PC-3 (cell line): ENCODE measurements at regions of chr19 and their contacts with region 1.

Region 1: DNA sequence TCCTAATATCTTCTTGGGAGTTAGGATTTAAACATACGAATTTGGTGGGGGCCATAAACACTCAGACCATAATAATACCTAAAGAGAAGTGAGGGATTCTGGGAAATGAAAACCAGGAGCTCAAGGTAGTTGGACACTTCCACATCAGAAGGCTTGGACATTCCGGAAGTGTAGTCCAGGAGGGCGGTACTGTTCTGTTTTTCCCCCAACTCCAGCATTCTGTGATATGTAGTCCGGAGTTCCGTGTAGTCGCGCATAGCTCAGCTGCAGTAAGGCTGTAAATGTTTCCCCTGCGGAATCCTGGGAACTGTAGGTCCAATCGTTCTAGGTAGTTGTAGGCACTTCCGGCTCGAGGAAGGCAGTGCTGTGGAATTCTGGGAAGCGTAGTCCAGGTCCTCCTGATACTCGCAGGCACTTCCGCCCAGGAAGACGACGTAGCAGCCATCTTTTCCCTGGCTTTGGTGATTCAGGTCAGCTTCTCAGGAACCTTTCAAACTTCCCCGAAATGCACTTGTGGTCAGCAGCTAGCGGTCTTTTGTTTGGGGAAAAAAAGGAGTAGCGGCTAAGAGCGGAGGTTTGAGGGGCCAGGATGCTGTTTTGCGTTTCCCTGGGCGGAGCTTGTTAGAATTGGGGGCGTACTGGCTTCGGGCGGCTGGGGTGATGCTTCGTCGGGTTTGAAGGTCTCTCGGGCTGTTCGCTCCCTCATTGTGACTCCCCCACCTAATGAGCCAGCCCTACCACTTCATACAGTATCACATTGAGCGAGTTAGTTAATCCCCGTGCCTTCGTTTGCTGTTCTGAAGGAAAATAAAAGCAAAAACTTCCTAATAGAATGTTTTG is at the start of gene ZNF226:
- DNase-seq: peak; percentile 92
- ATAC-seq: peak; percentile 99
- H3K4me3 ChIP-seq: peak within 1 kb of the TSS; percentile 75
- H3K27ac ChIP-seq: peak within 1 kb of the TSS; percentile 13
- H3K4me1 ChIP-seq: peaks cover 5% of the 10 kb centered on the region; the same call in 1 of the 2 replicates
- H3K27me3 ChIP-seq: no peaks in the 10 kb centered on the region
- CTCF ChIP-seq: no peak
- total RNA-seq, gene ZNF226: 4.8 and 6.0 TPM in 2 replicates

Region 2: GRCh38 chr19:43555185-43555770 is 609.6 kb before region 1 on chr19:
- CTCF ChIA-PET with region 1: no interaction called
- POLR2A ChIA-PET with region 1: interaction called, 16 read pairs
- intact Hi-C with region 1: no loop called
- DNase-seq: peak; percentile 56
- ATAC-seq: peak; percentile 45; the same call in 1 of the 2 replicates
- H3K4me3 ChIP-seq: no peak overlapping the region
- H3K27ac ChIP-seq: no peak overlapping the region
- H3K4me1 ChIP-seq: no peaks in the 10 kb centered on the region
- H3K27me3 ChIP-seq: no peaks in the 10 kb centered on the region
- CTCF ChIP-seq: peak; percentile 71

Region 3: GRCh38 chr19:44141191-44142058 is 23.5 kb before region 1 on chr19 and contains the start of gene ZNF234:
- CTCF ChIA-PET with region 1: no interaction called
- POLR2A ChIA-PET with region 1: interaction called, 3 read pairs
- intact Hi-C with region 1: loop called (anchors 2 kb)
- DNase-seq: peak; percentile 70
- ATAC-seq: peak; percentile 88
- H3K4me3 ChIP-seq: peak within 1 kb of the TSS; percentile 83
- H3K27ac ChIP-seq: no peak within 1 kb of the TSS
- H3K4me1 ChIP-seq: no peaks in the 10 kb centered on the region
- H3K27me3 ChIP-seq: no peaks in the 10 kb centered on the region
- CTCF ChIP-seq: no peak
- total RNA-seq, gene ZNF234: 1.3 and 1.6 TPM in 2 replicates

Region 4: DNA sequence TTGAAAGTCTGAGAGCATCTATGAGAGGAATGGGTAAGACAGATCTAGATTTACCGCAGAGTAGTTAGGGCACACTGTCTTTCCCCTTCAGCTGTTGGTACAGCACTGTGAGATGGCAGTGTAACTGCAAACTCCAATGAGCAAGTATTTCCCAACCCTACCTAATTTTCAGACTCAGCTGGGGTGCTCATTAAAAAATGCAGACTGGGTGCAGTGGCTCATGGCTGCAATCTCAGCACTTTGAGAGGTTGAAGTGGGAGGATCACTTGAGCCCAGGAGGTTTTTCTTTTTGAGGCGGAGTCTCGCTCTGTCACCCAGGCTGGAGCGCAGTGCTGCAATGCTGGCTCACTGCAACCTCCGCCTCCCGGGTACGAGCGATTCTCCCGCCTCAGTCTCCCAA is 1540.2 kb after region 1 on chr19:
- CTCF ChIA-PET with region 1: no interaction called
- POLR2A ChIA-PET with region 1: no interaction called
- intact Hi-C with region 1: no loop called
- DNase-seq: no peak
- ATAC-seq: no peak
- H3K4me3 ChIP-seq: no peak overlapping the region
- H3K27ac ChIP-seq: no peak overlapping the region
- H3K4me1 ChIP-seq: no peaks in the 10 kb centered on the region
- H3K27me3 ChIP-seq: no peaks in the 10 kb centered on the region
- CTCF ChIP-seq: no peak